B cell (primary cell): ENCODE measurements at regions of chr1 and their contacts with region 1.

Region 1: DNA sequence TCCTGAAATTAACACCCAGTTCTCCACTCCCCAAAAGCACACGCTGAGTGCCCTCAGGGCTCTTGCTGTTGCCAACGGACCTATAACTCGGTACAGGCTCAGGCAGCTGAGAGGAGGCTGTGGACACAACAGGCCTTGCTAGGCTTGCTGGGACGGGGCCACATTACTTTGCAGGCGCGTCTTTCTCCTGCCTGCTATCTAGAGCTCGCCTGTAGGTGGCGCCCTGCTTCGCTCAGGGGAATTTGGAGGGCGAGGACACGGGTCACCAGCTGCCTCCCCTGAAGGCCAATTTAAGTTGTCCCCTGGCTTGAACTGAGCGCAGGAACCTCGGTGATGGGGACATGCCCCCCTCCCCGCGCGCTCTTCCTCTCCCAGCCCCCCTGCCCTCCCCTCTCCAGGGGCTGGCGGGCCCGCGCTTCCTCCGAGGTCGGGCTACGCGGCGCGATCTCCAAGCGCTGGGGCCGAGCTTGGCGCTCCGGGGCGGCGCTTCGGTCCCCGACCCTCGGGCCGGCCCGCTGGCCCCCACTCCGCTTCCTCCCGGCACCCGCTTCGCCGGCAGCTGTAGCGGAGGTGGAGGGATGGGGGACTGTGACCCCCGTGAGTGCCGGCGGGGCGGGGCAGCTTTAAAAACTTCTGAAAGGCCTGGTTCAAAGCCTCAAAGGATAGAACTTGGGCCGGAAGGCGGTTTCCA is 32.4 kb upstream of the NFIA start:
- DNase-seq: peak; percentile 89
- ATAC-seq: peak; percentile 87
- H3K4me3 ChIP-seq: peak overlapping the region in 4 of 5 experiments; percentile 52 to 77 (median 72)
- H3K4me3 Mint-ChIP-seq: peak overlapping the region; percentile 86
- H3K27ac ChIP-seq: no peak overlapping the region
- H3K27ac Mint-ChIP-seq: peak overlapping the region; percentile 32
- H3K4me1 ChIP-seq: peaks cover 33 to 37% of the 10 kb centered on the region in 2 donors
- H3K4me1 Mint-ChIP-seq: peaks cover 29% of the 10 kb centered on the region
- H3K27me3 ChIP-seq: peaks cover 0 to 52% (median 48%) of the 10 kb centered on the region in 4 experiments
- H3K27me3 Mint-ChIP-seq: peaks cover 57% of the 10 kb centered on the region
- CTCF ChIP-seq: peak; percentile 94

Region 2: GRCh38 chr1:61067404-61068019 is 17.5 kb after region 1 on chr1:
- CTCF ChIA-PET with region 1: interaction called, 14 read pairs
- POLR2A ChIA-PET with region 1: no interaction called
- intact Hi-C with region 1: no loop called
- DNase-seq: no peak
- ATAC-seq: no peak
- H3K4me3 ChIP-seq: no peak overlapping the region
- H3K4me3 Mint-ChIP-seq: no peak overlapping the region
- H3K27ac ChIP-seq: no peak overlapping the region
- H3K27ac Mint-ChIP-seq: no peak overlapping the region
- H3K4me1 ChIP-seq: no peaks in the 10 kb centered on the region
- H3K4me1 Mint-ChIP-seq: no peaks in the 10 kb centered on the region
- H3K27me3 ChIP-seq: no peaks in the 10 kb centered on the region
- H3K27me3 Mint-ChIP-seq: peaks cover 16% of the 10 kb centered on the region
- CTCF ChIP-seq: no peak

Region 3: DNA sequence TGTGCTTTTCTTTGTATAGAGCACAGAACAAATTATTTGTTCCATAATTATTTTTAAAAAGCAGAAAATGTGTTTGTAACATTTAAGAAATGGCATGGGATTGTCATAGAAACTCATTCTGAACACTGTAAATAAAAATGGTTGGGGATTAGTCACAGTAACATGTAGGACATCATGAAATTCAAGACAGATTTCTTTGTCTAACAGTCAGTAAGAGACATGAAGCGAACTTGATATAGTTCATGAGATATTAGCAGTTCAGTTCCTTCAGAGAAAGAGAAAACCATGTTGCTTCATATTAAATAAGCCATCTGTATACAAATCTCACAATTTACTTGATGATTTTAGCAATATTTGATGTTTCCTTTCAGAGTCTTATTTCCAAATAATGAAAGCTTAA is 52.0 kb after region 1 on chr1:
- CTCF ChIA-PET with region 1: interaction called, 5 read pairs
- POLR2A ChIA-PET with region 1: no interaction called
- intact Hi-C with region 1: loop called (anchors 10 kb)
- DNase-seq: no peak
- ATAC-seq: no peak
- H3K4me3 ChIP-seq: no peak overlapping the region
- H3K4me3 Mint-ChIP-seq: no peak overlapping the region
- H3K27ac ChIP-seq: no peak overlapping the region
- H3K27ac Mint-ChIP-seq: no peak overlapping the region
- H3K4me1 ChIP-seq: no peaks in the 10 kb centered on the region
- H3K4me1 Mint-ChIP-seq: no peaks in the 10 kb centered on the region
- H3K27me3 ChIP-seq: no peaks in the 10 kb centered on the region
- H3K27me3 Mint-ChIP-seq: peaks cover 8% of the 10 kb centered on the region
- CTCF ChIP-seq: no peak

Region 4: DNA sequence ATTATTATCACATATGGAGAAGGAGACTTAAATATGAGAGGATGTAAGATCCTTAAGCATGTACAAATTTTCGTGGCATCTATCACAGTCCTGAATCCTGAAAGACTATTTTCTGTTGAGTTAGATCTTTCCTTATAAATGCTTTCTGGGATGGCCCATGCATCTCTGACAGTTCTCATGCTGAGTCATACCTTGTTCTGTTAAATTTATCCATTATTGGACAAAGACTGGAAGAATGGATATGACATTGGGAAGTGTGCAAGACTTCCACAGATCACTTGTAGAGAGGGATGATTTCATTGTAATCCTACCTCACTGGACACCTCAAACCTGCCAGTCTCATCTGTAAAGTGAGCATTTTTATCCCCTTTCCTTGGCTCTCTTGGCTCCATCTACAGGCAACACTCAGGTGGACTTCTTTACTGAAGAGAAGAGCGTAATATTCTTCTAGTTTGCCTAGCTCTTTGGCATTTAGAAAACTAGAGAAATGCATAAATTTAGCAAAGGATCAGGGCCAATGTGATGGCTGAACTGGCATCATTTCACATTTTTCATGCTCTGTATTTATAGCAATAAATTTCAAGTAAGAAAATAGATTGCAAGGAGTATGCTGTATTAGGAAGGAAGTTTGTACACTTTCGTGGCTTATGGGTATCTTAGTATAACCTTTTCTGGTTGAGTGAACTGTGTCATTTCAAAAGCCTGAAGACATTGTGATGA is 160.6 kb after region 1 on chr1:
- CTCF ChIA-PET with region 1: interaction called, 20 read pairs
- POLR2A ChIA-PET with region 1: no interaction called
- intact Hi-C with region 1: loop called (anchors 10 kb)
- DNase-seq: no peak
- ATAC-seq: no peak
- H3K4me3 ChIP-seq: no peak overlapping the region
- H3K4me3 Mint-ChIP-seq: no peak overlapping the region
- H3K27ac ChIP-seq: no peak overlapping the region
- H3K27ac Mint-ChIP-seq: no peak overlapping the region
- H3K4me1 ChIP-seq: no peaks in the 10 kb centered on the region
- H3K4me1 Mint-ChIP-seq: no peaks in the 10 kb centered on the region
- H3K27me3 ChIP-seq: peaks cover 0 to 4% (median 1%) of the 10 kb centered on the region in 4 experiments
- H3K27me3 Mint-ChIP-seq: peaks cover 5% of the 10 kb centered on the region
- CTCF ChIP-seq: no peak

Region 5: GRCh38 chr1:61453111-61453961 is 403.3 kb after region 1 on chr1:
- CTCF ChIA-PET with region 1: interaction called, 21 read pairs
- POLR2A ChIA-PET with region 1: interaction called, 3 read pairs
- intact Hi-C with region 1: loop called (anchors 1 kb)
- DNase-seq: peak; percentile 66
- ATAC-seq: peak; percentile 54
- H3K4me3 ChIP-seq: no peak overlapping the region
- H3K4me3 Mint-ChIP-seq: no peak overlapping the region
- H3K27ac ChIP-seq: no peak overlapping the region
- H3K27ac Mint-ChIP-seq: no peak overlapping the region
- H3K4me1 ChIP-seq: peaks cover 0 to 4% of the 10 kb centered on the region in 2 donors
- H3K4me1 Mint-ChIP-seq: peaks cover 3% of the 10 kb centered on the region
- H3K27me3 ChIP-seq: no peaks in the 10 kb centered on the region
- H3K27me3 Mint-ChIP-seq: peaks cover 4% of the 10 kb centered on the region
- CTCF ChIP-seq: peak; percentile 62

Region 6: GRCh38 chr1:61641578-61642336 is 591.8 kb after region 1 on chr1:
- CTCF ChIA-PET with region 1: interaction called, 11 read pairs
- POLR2A ChIA-PET with region 1: no interaction called
- intact Hi-C with region 1: no loop called
- DNase-seq: peak; percentile 42
- ATAC-seq: peak; percentile 92
- H3K4me3 ChIP-seq: peak overlapping the region in 4 of 5 experiments; percentile 12 to 70 (median 54)
- H3K4me3 Mint-ChIP-seq: peak overlapping the region; percentile 86
- H3K27ac ChIP-seq: no peak overlapping the region
- H3K27ac Mint-ChIP-seq: peak overlapping the region; percentile 27
- H3K4me1 ChIP-seq: no peaks in the 10 kb centered on the region
- H3K4me1 Mint-ChIP-seq: peaks cover 16% of the 10 kb centered on the region
- H3K27me3 ChIP-seq: no peaks in the 10 kb centered on the region
- H3K27me3 Mint-ChIP-seq: peaks cover 4% of the 10 kb centered on the region
- CTCF ChIP-seq: peak; percentile 83